ENCODE measurements at regions of chr11 and their contacts with region 1.

Region 1: DNA sequence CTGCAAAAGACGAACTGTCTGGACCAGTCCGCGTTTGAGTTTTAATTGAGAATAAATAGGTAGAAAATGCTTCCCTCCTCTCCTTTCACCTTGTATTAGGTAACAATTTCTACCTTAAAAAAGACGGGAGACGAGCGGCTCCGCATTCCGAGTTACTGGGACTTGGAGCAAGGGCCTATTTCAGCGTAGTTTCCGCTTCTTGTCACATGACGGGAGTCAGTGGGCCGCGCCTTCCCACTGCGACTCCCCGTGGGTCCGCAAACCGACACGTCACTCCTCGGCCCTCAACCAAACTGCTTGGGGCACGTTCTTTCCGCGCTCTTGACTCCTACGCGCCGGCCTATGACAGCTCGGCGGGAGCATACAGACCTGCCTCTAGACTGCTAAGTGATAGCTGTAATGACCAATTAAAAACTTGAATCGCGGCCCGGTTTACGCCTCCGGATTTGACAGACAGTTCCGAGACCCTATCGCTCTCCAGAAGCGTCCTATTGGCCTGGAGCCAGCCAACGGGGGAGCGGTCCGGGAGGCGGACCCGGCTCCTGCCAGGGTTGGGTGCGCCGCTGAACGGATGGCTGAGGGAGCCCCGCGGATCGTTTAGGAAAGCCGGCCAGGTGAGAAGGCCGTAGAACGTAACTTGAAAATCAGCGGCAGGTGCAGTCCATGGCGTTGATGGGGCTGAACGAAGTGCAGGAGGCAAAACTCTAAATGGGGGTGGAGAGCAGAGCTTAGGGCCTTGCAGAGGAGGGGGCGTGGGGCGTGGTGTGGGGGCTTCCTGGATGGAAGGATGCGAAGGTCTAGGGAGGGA is at the start of gene STT3A:
- DNase-seq: peak; percentile 99
- H3K4me3 Mint-ChIP-seq: peak within 1 kb of the TSS; percentile 100
- H3K27ac Mint-ChIP-seq: peak within 1 kb of the TSS; percentile 92
- H3K4me1 Mint-ChIP-seq: peaks cover 51% of the 10 kb centered on the region
- H3K27me3 Mint-ChIP-seq: no peaks in the 10 kb centered on the region
- total RNA-seq, gene STT3A: 111 to 113 TPM

Region 2: DNA sequence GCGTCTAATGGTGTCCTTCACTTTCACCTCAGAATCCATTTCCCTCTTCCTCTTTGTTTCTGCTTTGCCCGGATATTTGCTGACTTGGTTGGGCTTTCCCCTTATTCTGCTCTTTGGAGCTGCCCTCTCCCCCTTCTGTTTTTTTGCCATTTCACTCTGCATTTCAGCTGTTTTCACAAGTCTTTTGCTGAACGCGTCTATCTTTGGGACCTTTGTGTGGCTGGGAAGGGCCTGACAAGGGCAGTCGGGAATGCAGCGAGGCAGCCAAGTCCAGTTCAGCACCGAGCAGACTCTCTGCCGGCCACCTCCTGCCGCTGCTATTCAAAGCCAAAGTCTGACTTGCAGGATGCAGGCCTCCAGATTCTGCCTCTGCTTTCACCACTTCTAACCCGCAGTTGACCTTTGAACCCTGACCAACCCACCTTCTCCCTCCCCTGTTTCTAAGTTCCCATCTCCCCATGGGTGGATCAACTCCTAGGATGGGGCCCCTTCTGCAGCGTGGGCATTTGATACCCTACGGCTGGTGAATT is 134.6 kb before region 1 on chr11:
- CTCF ChIA-PET with region 1: no interaction called
- intact Hi-C with region 1: no loop called
- DNase-seq: no peak
- H3K4me3 Mint-ChIP-seq: no peak overlapping the region
- H3K27ac Mint-ChIP-seq: no peak overlapping the region
- H3K4me1 Mint-ChIP-seq: no peaks in the 10 kb centered on the region
- H3K27me3 Mint-ChIP-seq: no peaks in the 10 kb centered on the region

Region 3: DNA sequence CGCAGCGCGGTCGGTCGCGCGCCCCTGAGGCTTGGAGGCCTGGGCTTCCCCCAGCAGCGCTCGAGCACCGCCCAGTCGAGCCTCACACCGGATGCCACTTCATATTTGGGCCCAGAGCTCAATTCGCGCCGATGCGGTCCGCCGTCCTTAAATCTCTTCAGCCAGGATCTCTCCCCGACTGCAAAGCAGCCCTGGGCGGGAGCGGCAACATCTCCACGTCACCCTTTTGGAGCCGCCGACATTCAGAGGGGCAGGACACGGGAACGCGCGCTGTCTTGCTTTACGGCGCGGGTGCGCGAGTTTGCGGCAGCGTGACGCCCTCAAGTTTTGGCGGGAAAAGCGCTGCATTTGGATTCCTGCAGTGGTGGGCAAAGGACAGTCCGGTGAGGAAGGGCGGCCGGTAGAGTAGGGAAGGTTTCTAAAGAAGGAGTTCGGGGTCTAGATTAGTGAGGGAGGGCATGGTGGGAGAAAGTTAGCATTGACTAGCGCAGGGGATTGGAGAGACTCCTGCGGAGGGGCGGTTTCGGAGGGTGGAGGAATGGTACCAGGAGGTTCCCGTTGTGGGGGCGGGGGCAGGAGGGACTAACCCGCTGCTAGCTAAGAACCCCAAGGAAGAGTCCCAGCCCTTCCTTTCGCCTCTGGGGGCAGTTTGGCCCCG is 33.2 kb after region 1 on chr11:
- CTCF ChIA-PET with region 1: interaction called, 3 read pairs
- intact Hi-C with region 1: loop called (anchors 1 kb)
- DNase-seq: peak; percentile 90
- H3K4me3 Mint-ChIP-seq: peak overlapping the region; percentile 89
- H3K27ac Mint-ChIP-seq: peak overlapping the region; percentile 99
- H3K4me1 Mint-ChIP-seq: peaks cover 21% of the 10 kb centered on the region
- H3K27me3 Mint-ChIP-seq: no peaks in the 10 kb centered on the region

Measured in activated naive CD4-positive, alpha-beta T cell treated with anti-CD3 and anti-CD28 coated beads for 36 hours (primary cell).